ENCODE measurements at regions of chr5 and their contacts with region 1.

Region 1: GRCh38 chr5:43609752-43610151 is 6.8 kb downstream of the NNT start:
- DNase-seq: no peak
- ATAC-seq: no peak
- H3K4me3 ChIP-seq: no peak overlapping the region
- H3K27ac ChIP-seq: no peak overlapping the region
- H3K4me1 ChIP-seq: peaks cover 0 to 39% (median 14%) of the 10 kb centered on the region in 12 donors
- H3K27me3 ChIP-seq: no peaks in the 10 kb centered on the region
- CTCF ChIP-seq: peak in 1 of 12 donors; percentile 23
- POLR2A ChIP-seq: no peak

Region 2: GRCh38 chr5:43623048-43623680 is 13.4 kb after region 1 on chr5:
- intact Hi-C with region 1: loop called in 1 of 10 experiments (anchors 1 kb)
- DNase-seq: no peak
- ATAC-seq: peak in 1 of 4 donors; percentile 27
- H3K4me3 ChIP-seq: no peak overlapping the region
- H3K27ac ChIP-seq: peak overlapping the region in 2 of 12 donors; percentile 7 to 16
- H3K4me1 ChIP-seq: peaks cover 0 to 46% (median 6%) of the 10 kb centered on the region in 12 donors
- H3K27me3 ChIP-seq: no peaks in the 10 kb centered on the region
- CTCF ChIP-seq: no peak
- POLR2A ChIP-seq: no peak

Region 3: GRCh38 chr5:43635374-43635773 is 25.6 kb after region 1 on chr5:
- intact Hi-C with region 1: no loop called
- DNase-seq: no peak
- ATAC-seq: peak in 1 of 4 donors; percentile 16
- H3K4me3 ChIP-seq: no peak overlapping the region
- H3K27ac ChIP-seq: peak overlapping the region in 2 of 12 donors; percentile 0 to 13
- H3K4me1 ChIP-seq: peaks cover 0 to 89% (median 49%) of the 10 kb centered on the region in 12 donors
- H3K27me3 ChIP-seq: no peaks in the 10 kb centered on the region
- CTCF ChIP-seq: no peak
- POLR2A ChIP-seq: no peak

Region 4: DNA sequence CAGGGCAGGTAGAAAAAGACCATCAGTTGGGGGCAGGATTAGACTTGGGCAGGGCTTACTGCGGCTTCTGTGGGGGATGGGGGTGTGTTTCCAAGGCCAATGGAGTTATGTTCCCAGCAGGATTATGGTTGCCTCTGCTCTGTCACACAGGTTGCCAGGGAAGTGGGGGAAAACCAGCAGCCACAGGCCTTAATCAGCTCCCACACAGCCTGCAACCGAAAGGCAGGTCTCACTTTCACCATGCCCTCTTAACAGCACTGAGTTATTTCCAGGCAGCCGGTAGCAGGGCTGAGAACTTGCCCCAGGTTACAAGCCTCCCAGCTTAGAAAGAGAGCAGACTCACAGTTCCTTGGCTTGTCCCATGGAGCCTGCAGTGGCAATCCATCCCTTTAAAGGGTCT is 574.0 kb after region 1 on chr5:
- intact Hi-C with region 1: no loop called
- DNase-seq: no peak
- ATAC-seq: no peak
- H3K4me3 ChIP-seq: no peak overlapping the region
- H3K27ac ChIP-seq: no peak overlapping the region
- H3K4me1 ChIP-seq: no peaks in the 10 kb centered on the region
- H3K27me3 ChIP-seq: no peaks in the 10 kb centered on the region
- CTCF ChIP-seq: no peak
- POLR2A ChIP-seq: no peak